Posterior cingulate gyrus (tissue), 11 donors: ENCODE measurements at regions of chr1 and their contacts with region 1.

Region 1: GRCh38 chr1:157992031-157992832 is 1.2 kb upstream of the KIRREL1 start:
- DNase-seq: peak in 9 of 10 donors; percentile 33 to 93 (median 67)

Region 2: DNA sequence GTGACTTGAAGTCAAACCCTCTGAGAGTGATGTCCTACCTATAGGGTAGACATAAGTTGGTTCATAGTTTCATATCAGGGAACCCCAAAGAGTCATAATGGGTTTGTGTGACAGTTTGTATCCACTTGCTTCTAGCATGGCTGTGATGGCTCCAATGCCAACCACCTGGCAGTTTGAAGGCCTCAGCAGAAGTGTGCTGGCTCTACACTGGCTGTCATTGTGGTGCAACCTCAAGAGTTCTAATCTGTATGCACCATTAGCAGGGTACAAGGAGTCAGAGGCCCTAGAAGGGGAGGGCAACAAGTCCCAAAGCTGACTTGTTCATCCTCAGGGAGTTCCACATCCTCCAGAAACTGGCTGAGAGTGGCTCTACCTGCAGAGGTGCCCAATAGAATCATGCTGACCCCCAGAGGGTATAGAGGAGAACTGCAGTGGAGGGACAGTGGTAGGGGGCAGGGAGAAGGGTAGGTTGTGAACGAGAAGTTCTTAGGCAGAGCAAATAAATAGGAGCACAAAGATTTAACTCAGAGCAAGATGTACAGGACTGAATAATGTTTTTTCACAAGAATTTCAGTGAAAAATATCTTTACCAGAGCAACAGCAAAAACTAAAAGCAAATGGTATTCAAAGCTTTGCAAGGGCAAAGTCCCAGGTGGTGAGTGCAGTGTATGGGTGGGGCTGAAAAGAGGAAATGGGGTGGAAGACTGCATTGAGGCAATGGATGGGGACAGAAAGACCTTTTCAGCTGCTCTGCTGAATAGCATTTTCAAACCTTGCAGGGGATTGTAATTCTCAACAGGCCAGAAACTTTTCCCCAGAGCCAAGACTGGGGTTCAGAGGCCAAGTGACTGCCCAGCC is 218.5 kb before region 1 on chr1:
- intact Hi-C with region 1: no loop called
- DNase-seq: no peak

Region 3: GRCh38 chr1:158087320-158087927 is 95.2 kb after region 1 on chr1:
- intact Hi-C with region 1: loop called (anchors 5 kb)
- DNase-seq: peak in 5 of 10 donors; percentile 27 to 86 (median 46)

Region 4: DNA sequence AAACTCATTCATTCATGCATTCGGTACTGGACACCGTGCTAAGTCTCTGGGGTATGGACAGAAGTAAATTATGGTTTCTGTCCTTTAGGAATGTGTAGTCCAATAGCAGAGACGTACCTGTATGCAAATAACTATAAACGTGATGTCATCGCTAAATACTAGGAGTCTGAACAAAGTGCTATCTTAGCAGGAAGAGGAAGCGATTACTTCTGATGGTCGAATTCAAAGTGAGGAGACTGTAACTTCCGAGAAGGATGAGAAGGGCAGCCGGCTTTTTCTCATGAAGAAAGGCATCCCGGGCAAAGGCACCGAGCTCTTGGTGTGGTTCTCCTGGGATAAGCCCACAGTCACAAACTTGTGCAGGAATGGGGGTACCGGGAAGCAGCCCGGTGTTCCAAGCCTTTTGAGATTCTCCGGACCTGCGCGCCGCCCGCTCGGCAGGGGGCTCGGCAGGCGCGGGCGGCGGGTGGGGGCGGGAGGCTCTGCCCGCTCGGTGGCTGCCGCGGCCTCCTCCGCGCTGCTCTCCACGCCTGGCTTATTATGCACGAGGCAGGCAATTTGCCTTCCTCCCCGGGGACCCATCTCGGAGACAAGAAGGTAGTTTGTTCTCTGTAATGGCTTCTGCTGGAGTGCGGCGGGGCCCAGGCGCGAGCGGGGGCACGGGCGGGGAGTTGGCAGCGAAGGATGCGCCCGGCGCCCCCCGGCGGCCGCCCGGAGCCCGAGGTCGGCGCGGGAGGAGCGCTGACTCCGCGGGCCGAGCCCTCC is 120.9 kb after region 1 on chr1:
- intact Hi-C with region 1: no loop called
- DNase-seq: peak in 6 of 10 donors; percentile 21 to 87 (median 68)